CD4-positive, alpha-beta T cell (primary cell): ENCODE measurements at regions of chr14 and their contacts with region 1.

Region 1: GRCh38 chr14:56117765-56118610 is at the start of gene PELI2:
- DNase-seq: peak; percentile 72 to 95 (median 82)
- ATAC-seq: peak; percentile 81
- H3K4me3 ChIP-seq: peak within 1 kb of the TSS; percentile 75
- H3K4me3 Mint-ChIP-seq: peak within 1 kb of the TSS; percentile 95
- H3K27ac ChIP-seq: peak within 1 kb of the TSS; percentile 91 to 94
- H3K27ac Mint-ChIP-seq: peak within 1 kb of the TSS; percentile 82
- H3K4me1 ChIP-seq: peaks cover 27% of the 10 kb centered on the region
- H3K4me1 Mint-ChIP-seq: peaks cover 52% of the 10 kb centered on the region
- H3K27me3 ChIP-seq: peaks cover 0 to 9% of the 10 kb centered on the region in 2 experiments
- H3K27me3 Mint-ChIP-seq: peaks cover 8% of the 10 kb centered on the region
- CTCF ChIP-seq: no peak
- total RNA-seq, gene PELI2: 12.2 to 15.9 TPM

Region 2: DNA sequence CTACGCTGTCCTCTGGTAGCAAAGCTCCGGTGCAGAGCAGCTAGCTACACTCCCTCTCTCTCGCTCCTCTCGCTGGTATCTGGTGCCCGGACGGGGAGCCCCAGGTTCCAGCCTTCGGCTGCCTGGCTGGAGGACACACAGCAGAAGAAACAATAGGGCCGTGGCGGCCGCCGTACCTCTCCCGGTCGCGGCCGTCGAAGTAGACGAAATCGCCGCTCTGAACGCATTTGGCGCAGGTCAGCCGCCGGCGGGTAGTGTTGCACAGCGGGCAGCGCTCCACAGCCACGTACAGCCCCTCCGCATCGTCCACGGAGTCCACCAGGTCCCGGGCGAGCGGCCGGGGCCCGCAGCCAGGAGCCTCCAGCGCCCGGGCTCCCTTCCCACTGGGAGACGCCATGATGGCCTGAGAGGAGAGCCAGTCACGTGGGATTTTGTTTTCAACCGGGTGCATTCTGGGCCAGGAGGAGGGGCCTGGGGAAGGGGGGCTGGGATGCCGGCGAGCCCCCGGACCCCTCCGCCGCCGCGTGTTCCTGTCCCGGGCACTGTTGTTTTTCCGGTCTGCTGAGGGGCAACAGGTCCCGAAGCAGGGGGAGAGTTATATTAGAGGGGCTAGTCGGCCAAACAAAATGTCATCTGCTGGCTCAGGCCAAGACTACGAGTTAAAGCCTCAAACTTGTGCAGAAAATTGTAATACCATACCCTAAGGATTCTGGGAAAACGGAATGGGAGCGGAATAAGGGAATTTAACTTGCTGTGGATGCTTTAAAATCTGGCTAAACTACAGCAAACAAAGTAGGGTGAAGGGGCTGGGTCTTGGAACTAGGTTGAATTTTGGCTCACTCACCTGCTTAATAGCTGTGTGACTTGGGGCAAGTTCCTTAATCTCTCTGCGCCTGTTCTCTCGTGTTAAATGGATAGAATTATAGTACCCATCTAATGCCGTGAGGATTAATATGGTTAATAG is 706.3 kb before region 1 on chr14 and contains the start of gene ATG14:
- CTCF ChIA-PET with region 1: no interaction called
- POLR2A ChIA-PET with region 1: no interaction called
- intact Hi-C with region 1: loop called in 1 of 2 experiments (anchors 10 kb)
- DNase-seq: peak; percentile 51 to 85 (median 66)
- ATAC-seq: peak; percentile 98
- H3K4me3 ChIP-seq: peak within 1 kb of the TSS; percentile 92
- H3K4me3 Mint-ChIP-seq: peak within 1 kb of the TSS; percentile 85
- H3K27ac ChIP-seq: peak within 1 kb of the TSS; percentile 49 to 61
- H3K27ac Mint-ChIP-seq: peak within 1 kb of the TSS; percentile 69
- H3K4me1 ChIP-seq: peaks cover 9% of the 10 kb centered on the region
- H3K4me1 Mint-ChIP-seq: peaks cover 50% of the 10 kb centered on the region
- H3K27me3 ChIP-seq: no peaks in the 10 kb centered on the region
- H3K27me3 Mint-ChIP-seq: no peaks in the 10 kb centered on the region
- CTCF ChIP-seq: no peak
- total RNA-seq, gene ATG14: 19.9 to 20.5 TPM

Region 3: GRCh38 chr14:55938249-55938791 is 179.7 kb before region 1 on chr14:
- CTCF ChIA-PET with region 1: no interaction called
- POLR2A ChIA-PET with region 1: no interaction called
- intact Hi-C with region 1: no loop called
- DNase-seq: no peak
- ATAC-seq: no peak
- H3K4me3 ChIP-seq: no peak overlapping the region
- H3K4me3 Mint-ChIP-seq: no peak overlapping the region
- H3K27ac ChIP-seq: no peak overlapping the region
- H3K27ac Mint-ChIP-seq: no peak overlapping the region
- H3K4me1 ChIP-seq: no peaks in the 10 kb centered on the region
- H3K4me1 Mint-ChIP-seq: no peaks in the 10 kb centered on the region
- H3K27me3 ChIP-seq: no peaks in the 10 kb centered on the region
- H3K27me3 Mint-ChIP-seq: peaks cover 6% of the 10 kb centered on the region
- CTCF ChIP-seq: no peak

Region 4: GRCh38 chr14:56002876-56003625 is 114.9 kb before region 1 on chr14:
- CTCF ChIA-PET with region 1: no interaction called
- POLR2A ChIA-PET with region 1: interaction called, 4 read pairs
- intact Hi-C with region 1: loop called in 1 of 2 experiments (anchors 2 kb)
- DNase-seq: peak in 11 of 14 experiments; percentile 8 to 79 (median 18)
- ATAC-seq: peak; percentile 84
- H3K4me3 ChIP-seq: no peak overlapping the region
- H3K4me3 Mint-ChIP-seq: peak overlapping the region; percentile 27
- H3K27ac ChIP-seq: no peak overlapping the region
- H3K27ac Mint-ChIP-seq: peak overlapping the region; percentile 40
- H3K4me1 ChIP-seq: peaks cover 32% of the 10 kb centered on the region
- H3K4me1 Mint-ChIP-seq: peaks cover 31% of the 10 kb centered on the region
- H3K27me3 ChIP-seq: peaks cover 31 to 53% of the 10 kb centered on the region in 2 experiments
- H3K27me3 Mint-ChIP-seq: peaks cover 85% of the 10 kb centered on the region
- CTCF ChIP-seq: no peak

Region 5: GRCh38 chr14:56131865-56132833 is 14.2 kb after region 1 on chr14:
- CTCF ChIA-PET with region 1: interaction called, 3 read pairs
- POLR2A ChIA-PET with region 1: interaction called, 16 read pairs
- intact Hi-C with region 1: no loop called
- DNase-seq: no peak
- ATAC-seq: peak; percentile 34
- H3K4me3 ChIP-seq: no peak overlapping the region
- H3K4me3 Mint-ChIP-seq: no peak overlapping the region
- H3K27ac ChIP-seq: no peak overlapping the region
- H3K27ac Mint-ChIP-seq: no peak overlapping the region
- H3K4me1 ChIP-seq: peaks cover 17% of the 10 kb centered on the region
- H3K4me1 Mint-ChIP-seq: peaks cover 60% of the 10 kb centered on the region
- H3K27me3 ChIP-seq: no peaks in the 10 kb centered on the region
- H3K27me3 Mint-ChIP-seq: peaks cover 14% of the 10 kb centered on the region
- CTCF ChIP-seq: no peak

Region 6: DNA sequence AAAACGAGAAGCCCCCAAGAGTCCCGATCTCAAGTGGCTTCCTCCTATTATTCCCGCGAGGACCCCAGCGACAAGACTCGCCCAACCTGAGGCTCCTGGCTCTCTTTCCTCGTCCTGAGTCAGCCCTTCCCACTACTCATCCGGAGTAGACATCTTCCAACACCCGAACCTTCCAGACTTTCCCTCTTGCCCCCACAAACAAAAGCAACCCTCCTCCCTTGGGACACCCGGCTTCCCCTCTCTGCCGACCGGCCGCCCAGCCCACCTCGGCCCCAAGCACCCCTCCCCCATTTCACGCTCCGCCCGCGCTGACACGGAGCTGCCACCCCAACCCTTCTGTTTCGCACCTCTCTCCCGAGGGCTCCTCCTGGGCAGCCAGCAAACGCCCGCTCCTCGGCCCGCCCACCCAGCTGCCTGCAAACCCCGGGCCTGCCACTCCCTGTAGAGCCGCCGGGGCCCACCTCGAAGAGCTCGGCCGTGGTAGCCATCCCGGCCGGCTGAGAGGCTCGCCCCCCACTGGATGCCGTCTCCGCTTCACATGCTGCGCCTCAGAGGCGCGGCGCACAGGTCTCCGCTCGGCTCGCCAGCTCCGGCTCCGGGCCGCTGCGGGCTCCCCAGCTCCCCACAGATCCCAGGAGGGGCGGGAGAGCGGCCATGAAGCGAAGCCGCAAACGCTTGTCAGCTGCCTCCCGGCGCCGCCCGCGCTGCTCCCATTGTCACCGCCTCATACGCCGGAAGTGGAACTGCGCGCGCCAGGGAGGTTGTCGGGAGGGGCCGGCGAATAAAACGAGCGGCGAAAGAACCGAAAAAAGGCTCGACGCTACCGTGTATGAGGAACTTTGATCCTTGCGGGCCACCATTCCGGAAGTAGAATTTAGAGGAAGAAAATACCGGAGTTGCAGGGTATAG is 1150.4 kb after region 1 on chr14 and contains the starts of genes AP5M1 and EXOC5:
- CTCF ChIA-PET with region 1: no interaction called
- POLR2A ChIA-PET with region 1: interaction called, 10 read pairs
- intact Hi-C with region 1: no loop called
- DNase-seq: peak; percentile 81 to 97 (median 89)
- ATAC-seq: peak; percentile 84
- H3K4me3 ChIP-seq: peak within 1 kb of the TSS; percentile 76
- H3K4me3 Mint-ChIP-seq: peak within 1 kb of the TSS; percentile 99
- H3K27ac ChIP-seq: peak within 1 kb of the TSS; percentile 91
- H3K27ac Mint-ChIP-seq: peak within 1 kb of the TSS; percentile 99
- H3K4me1 ChIP-seq: peaks cover 17% of the 10 kb centered on the region
- H3K4me1 Mint-ChIP-seq: peaks cover 87% of the 10 kb centered on the region
- H3K27me3 ChIP-seq: no peaks in the 10 kb centered on the region
- H3K27me3 Mint-ChIP-seq: no peaks in the 10 kb centered on the region
- CTCF ChIP-seq: no peak
- total RNA-seq, gene AP5M1: 39.2 to 40.4 TPM
- total RNA-seq, gene EXOC5: 17.1 to 18.1 TPM